ENCODE measurements at regions of chr11 and their contacts with region 1.

Region 1: GRCh38 chr11:3854977-3855807 is at the start of gene STIM1:
- DNase-seq: peak; percentile 96 to 98 (median 96)
- ATAC-seq: peak; percentile 82 to 94 (median 92)
- H3K4me3 ChIP-seq: peak within 1 kb of the TSS; percentile 72 to 98 (median 90)
- H3K27ac ChIP-seq: peak within 1 kb of the TSS; percentile 90 to 99 (median 97)
- H3K4me1 ChIP-seq: peaks cover 5 to 61% (median 41%) of the 10 kb centered on the region in 12 donors
- H3K27me3 ChIP-seq: no peaks in the 10 kb centered on the region
- CTCF ChIP-seq: peak; percentile 95 to 99 (median 98)
- POLR2A ChIP-seq: peak in 1 of 2 donors; percentile 63
- total RNA-seq, gene STIM1: 24.4 to 42.9 (median 28.9) TPM

Region 2: GRCh38 chr11:3807909-3808860 is 47.0 kb before region 1 on chr11 and contains the start of gene PGAP2:
- intact Hi-C with region 1: no loop called
- DNase-seq: peak; percentile 60 to 83 (median 73)
- ATAC-seq: peak in 3 of 4 donors; percentile 59 to 80 (median 72)
- H3K4me3 ChIP-seq: peak within 1 kb of the TSS; percentile 38 to 96 (median 70)
- H3K27ac ChIP-seq: peak within 1 kb of the TSS in 11 of 12 donors; percentile 3 to 87 (median 71)
- H3K4me1 ChIP-seq: peaks cover 0 to 38% (median 16%) of the 10 kb centered on the region in 12 donors
- H3K27me3 ChIP-seq: no peaks in the 10 kb centered on the region
- CTCF ChIP-seq: peak; percentile 43 to 79 (median 62)
- POLR2A ChIP-seq: no peak
- total RNA-seq, gene PGAP2: 17.6 to 31.7 (median 23.3) TPM

Region 3: DNA sequence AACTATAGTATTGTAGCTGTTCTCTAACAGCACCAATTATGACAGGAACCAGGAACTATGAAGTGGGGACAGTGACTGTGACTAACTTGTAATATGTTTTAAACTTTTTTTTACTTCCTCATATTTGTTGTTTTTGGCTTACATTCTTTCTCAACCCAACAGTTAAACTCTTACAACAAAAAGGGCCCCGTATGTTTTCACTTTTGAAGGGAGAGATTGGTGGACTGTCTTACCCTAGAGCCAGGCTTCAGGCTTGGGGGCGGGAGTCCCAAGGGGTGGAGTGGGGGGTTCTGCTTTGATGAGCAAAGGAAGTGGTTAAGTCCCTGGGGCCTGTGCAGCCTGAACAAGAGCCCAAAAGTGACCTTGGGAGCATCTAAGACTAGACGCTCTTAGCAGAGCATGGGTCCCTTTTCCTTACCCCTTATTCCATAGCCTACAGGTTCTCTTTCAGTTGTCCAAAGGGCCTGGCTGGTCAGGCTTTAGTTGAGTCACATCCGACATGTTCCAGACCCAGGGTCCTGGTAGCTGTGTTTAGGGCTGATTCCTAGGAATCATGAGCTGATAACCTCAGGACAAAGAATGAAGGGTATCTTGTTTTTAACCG is 39.0 kb after region 1 on chr11:
- intact Hi-C with region 1: loop called in 1 of 10 experiments (anchors 2 kb)
- DNase-seq: peak; percentile 50 to 80 (median 78)
- ATAC-seq: peak; percentile 50 to 89 (median 72)
- H3K4me3 ChIP-seq: no peak overlapping the region
- H3K27ac ChIP-seq: peak overlapping the region in 11 of 12 donors; percentile 8 to 89 (median 50)
- H3K4me1 ChIP-seq: peaks cover 0 to 48% (median 22%) of the 10 kb centered on the region in 12 donors
- H3K27me3 ChIP-seq: no peaks in the 10 kb centered on the region
- CTCF ChIP-seq: no peak
- POLR2A ChIP-seq: no peak

Region 4: GRCh38 chr11:3939211-3939610 is 84.0 kb after region 1 on chr11:
- intact Hi-C with region 1: loop called in 3 of 10 experiments (anchors 5 to 10 kb)
- DNase-seq: no peak
- ATAC-seq: no peak
- H3K4me3 ChIP-seq: no peak overlapping the region
- H3K27ac ChIP-seq: peak overlapping the region in 1 of 12 donors; percentile 46
- H3K4me1 ChIP-seq: peaks cover 0 to 61% (median 38%) of the 10 kb centered on the region in 12 donors
- H3K27me3 ChIP-seq: no peaks in the 10 kb centered on the region
- CTCF ChIP-seq: no peak
- POLR2A ChIP-seq: no peak

Region 5: DNA sequence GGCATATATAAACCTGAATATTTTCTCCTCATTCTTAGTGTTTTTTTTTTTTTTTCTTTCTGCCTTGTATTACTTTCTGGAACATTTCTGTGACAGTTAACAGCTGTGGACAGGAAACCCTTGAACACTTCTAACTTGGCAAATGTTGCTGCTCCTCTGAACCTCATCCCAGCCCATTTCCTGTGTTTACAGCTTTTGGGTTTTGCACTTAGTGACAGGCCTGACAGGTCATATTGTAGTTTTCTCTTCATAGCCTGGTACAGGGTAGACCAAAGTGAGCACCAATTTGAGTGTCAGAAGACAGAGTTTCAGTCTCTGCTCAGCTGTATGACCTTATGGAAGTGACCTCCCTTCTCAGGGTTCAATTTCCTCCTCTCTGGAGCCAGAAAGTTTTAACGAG is 91.9 kb after region 1 on chr11:
- intact Hi-C with region 1: loop called in 8 of 10 experiments (anchors 5 to 10 kb)
- DNase-seq: peak in 4 of 5 donors; percentile 36 to 72 (median 50)
- ATAC-seq: peak; percentile 83 to 94 (median 92)
- H3K4me3 ChIP-seq: peak overlapping the region in 1 of 12 donors; percentile 19
- H3K27ac ChIP-seq: peak overlapping the region; percentile 43 to 88 (median 80)
- H3K4me1 ChIP-seq: peaks cover 5 to 97% (median 71%) of the 10 kb centered on the region in 12 donors
- H3K27me3 ChIP-seq: no peaks in the 10 kb centered on the region
- CTCF ChIP-seq: no peak
- POLR2A ChIP-seq: no peak

Region 6: GRCh38 chr11:3984896-3985295 is 129.7 kb after region 1 on chr11:
- intact Hi-C with region 1: loop called in 1 of 10 experiments (anchors 5 kb)
- DNase-seq: no peak
- ATAC-seq: peak in 2 of 4 donors; percentile 35 to 41
- H3K4me3 ChIP-seq: no peak overlapping the region
- H3K27ac ChIP-seq: no peak overlapping the region
- H3K4me1 ChIP-seq: peaks cover 0 to 49% (median 18%) of the 10 kb centered on the region in 12 donors
- H3K27me3 ChIP-seq: no peaks in the 10 kb centered on the region
- CTCF ChIP-seq: peak in 4 of 12 donors; percentile 11 to 28 (median 16)
- POLR2A ChIP-seq: no peak

Region 7: GRCh38 chr11:4072668-4073285 is 217.6 kb after region 1 on chr11:
- intact Hi-C with region 1: loop called in 8 of 10 experiments (anchors 1 to 2 kb)
- DNase-seq: peak in 3 of 5 donors; percentile 51 to 75 (median 60)
- ATAC-seq: peak; percentile 75 to 95 (median 82)
- H3K4me3 ChIP-seq: no peak overlapping the region
- H3K27ac ChIP-seq: peak overlapping the region in 2 of 12 donors; percentile 2 to 17
- H3K4me1 ChIP-seq: peaks cover 0 to 19% (median 2%) of the 10 kb centered on the region in 12 donors
- H3K27me3 ChIP-seq: no peaks in the 10 kb centered on the region
- CTCF ChIP-seq: peak; percentile 74 to 92 (median 86)
- POLR2A ChIP-seq: no peak